ENCODE measurements at regions of chr9 and their contacts with region 1.

Region 1: GRCh38 chr9:121686930-121687541 is 35.6 kb downstream of the DAB2IP start:
- DNase-seq: peak; percentile 71 to 80 (median 74)
- ATAC-seq: peak; percentile 90
- H3K4me3 ChIP-seq: no peak overlapping the region
- H3K27ac ChIP-seq: no peak overlapping the region
- H3K4me1 ChIP-seq: no peaks in the 10 kb centered on the region
- H3K27me3 ChIP-seq: peaks cover 0 to 15% of the 10 kb centered on the region in 2 experiments; a peak in 3 of 5 replicates
- CTCF ChIP-seq: peak; percentile 80 to 87 (median 84)
- EP300 ChIP-seq: no peak
- POLR2A ChIP-seq: no peak
- RAD21 ChIP-seq: peak; percentile 51 to 81

Region 2: GRCh38 chr9:121640076-121640475 is 47.0 kb before region 1 on chr9:
- CTCF ChIA-PET with region 1: no interaction called
- POLR2A ChIA-PET with region 1: interaction called, 3 read pairs
- in situ Hi-C with region 1: no loop called
- intact Hi-C with region 1: loop called (anchors 1 kb)
- DNase-seq: peak; percentile 55 to 71 (median 70)
- ATAC-seq: peak; percentile 96
- H3K4me3 ChIP-seq: no peak overlapping the region
- H3K27ac ChIP-seq: no peak overlapping the region
- H3K4me1 ChIP-seq: no peaks in the 10 kb centered on the region
- H3K27me3 ChIP-seq: peaks cover 0 to 24% of the 10 kb centered on the region in 2 experiments; a peak in 3 of 5 replicates
- CTCF ChIP-seq: peak; percentile 65 to 69 (median 65)
- EP300 ChIP-seq: no peak
- POLR2A ChIP-seq: no peak
- RAD21 ChIP-seq: peak; percentile 44 to 73

Region 3: DNA sequence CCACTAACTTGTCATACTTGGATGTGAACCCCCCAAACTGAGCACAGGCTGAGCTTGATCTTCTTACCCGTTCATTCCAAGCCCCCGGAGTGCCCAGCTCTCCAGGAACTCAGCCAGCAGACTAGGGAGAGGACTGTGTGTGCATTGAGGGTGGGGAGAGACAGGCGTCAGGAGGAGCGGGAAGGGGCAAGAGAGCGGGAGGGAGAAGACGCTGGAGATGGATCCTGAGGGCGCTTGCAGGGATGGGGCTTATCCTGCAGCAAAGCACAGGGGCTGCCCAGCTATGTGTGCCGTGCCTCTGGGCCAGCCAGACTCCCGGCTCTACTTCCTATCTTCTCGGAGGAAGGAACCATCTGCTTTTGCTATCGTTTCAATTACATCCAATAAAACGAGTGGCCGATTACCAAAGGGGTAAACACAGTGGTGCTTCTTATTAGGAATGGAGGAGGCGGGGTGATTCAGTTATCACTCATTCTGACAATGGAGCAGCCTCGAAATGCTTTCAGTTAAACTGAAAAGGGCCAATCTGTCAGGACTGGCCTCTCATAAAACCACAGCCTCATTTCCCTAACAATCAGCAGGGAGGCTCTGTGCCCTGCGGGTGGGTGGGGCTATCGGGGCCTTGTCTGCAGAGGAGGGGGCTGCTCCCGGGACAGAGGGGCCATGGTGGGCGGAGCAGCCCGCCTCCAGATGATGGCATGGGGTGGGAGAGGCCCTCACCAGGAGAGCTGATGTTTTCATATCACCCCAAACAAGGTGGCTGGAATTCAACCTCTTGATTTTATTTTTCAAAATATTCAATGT is 132.6 kb after region 1 on chr9:
- CTCF ChIA-PET with region 1: no interaction called
- POLR2A ChIA-PET with region 1: no interaction called
- in situ Hi-C with region 1: no loop called
- intact Hi-C with region 1: no loop called
- DNase-seq: no peak
- ATAC-seq: no peak
- H3K4me3 ChIP-seq: no peak overlapping the region
- H3K27ac ChIP-seq: no peak overlapping the region
- H3K4me1 ChIP-seq: peaks cover 0 to 2% of the 10 kb centered on the region in 2 experiments; a peak in 3 of 5 replicates
- H3K27me3 ChIP-seq: peaks cover 15 to 73% of the 10 kb centered on the region in 2 experiments; a peak in 4 of 5 replicates
- CTCF ChIP-seq: no peak
- EP300 ChIP-seq: no peak
- POLR2A ChIP-seq: no peak
- RAD21 ChIP-seq: no peak